ENCODE measurements at regions of chr2 and their contacts with region 1.

Region 1: GRCh38 chr2:20635675-20636584 is 15.0 kb downstream of the HS1BP3 start:
- DNase-seq: peak; percentile 78 to 87
- ATAC-seq: peak; percentile 90 to 98
- H3K4me3 ChIP-seq: no peak overlapping the region
- H3K27ac ChIP-seq: peak overlapping the region; percentile 50 to 75; a peak in 4 of 6 replicates
- H3K4me1 ChIP-seq: peaks cover 21% of the 10 kb centered on the region
- CTCF ChIP-seq: peak; percentile 97
- EP300 ChIP-seq: no peak
- POLR2A ChIP-seq: no peak
- RAD21 ChIP-seq: peak; percentile 100

Region 2: DNA sequence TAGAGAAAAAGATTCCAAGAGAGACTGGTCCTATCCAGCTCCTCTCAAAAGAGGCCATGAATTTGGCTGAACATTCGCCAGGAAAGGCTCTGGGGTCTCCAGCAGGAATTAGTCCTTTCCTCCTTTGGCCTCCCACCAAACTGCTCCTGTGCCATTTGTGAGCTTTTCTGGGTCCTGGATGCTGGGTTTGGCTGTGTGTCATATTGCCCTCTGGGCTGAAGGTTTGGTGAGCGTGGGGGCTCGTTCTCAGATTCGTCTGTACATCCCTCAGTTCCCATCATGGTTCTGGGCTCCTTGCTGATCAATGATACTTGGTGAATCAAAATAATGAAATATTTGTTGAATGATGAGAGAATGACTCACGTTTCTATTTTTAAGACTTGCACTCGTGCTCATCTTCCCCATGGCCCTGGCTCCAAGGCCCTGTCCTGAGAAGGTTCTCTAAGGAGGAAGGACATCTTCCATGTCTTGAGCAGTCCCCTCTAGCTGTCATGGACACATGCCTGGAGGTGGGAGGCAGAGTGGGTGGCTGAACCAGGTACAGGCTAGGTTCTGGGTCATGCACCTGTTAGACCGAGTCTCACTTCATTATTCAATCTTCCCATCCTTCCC is 236.9 kb before region 1 on chr2:
- CTCF ChIA-PET with region 1: interaction called, 355 read pairs
- POLR2A ChIA-PET with region 1: no interaction called
- DNase-seq: no peak
- ATAC-seq: no peak
- H3K4me3 ChIP-seq: no peak overlapping the region
- H3K27ac ChIP-seq: no peak overlapping the region
- H3K4me1 ChIP-seq: no peaks in the 10 kb centered on the region
- CTCF ChIP-seq: no peak
- EP300 ChIP-seq: no peak
- POLR2A ChIP-seq: no peak
- RAD21 ChIP-seq: no peak

Region 3: GRCh38 chr2:20438334-20439192 is 197.4 kb before region 1 on chr2:
- CTCF ChIA-PET with region 1: interaction called, 210 read pairs
- POLR2A ChIA-PET with region 1: interaction called, 6 read pairs
- DNase-seq: peak; percentile 78 to 91
- ATAC-seq: peak; percentile 80 to 86
- H3K4me3 ChIP-seq: peak overlapping the region; percentile 35
- H3K27ac ChIP-seq: peak overlapping the region; percentile 79 to 87
- H3K4me1 ChIP-seq: peaks cover 38% of the 10 kb centered on the region
- CTCF ChIP-seq: no peak
- EP300 ChIP-seq: peak; percentile 76 to 88; a peak in 2 of 5 replicates
- POLR2A ChIP-seq: no peak
- RAD21 ChIP-seq: no peak

Region 4: GRCh38 chr2:20516646-20517341 is 119.1 kb before region 1 on chr2:
- CTCF ChIA-PET with region 1: no interaction called
- POLR2A ChIA-PET with region 1: no interaction called
- DNase-seq: no peak
- ATAC-seq: no peak
- H3K4me3 ChIP-seq: no peak overlapping the region
- H3K27ac ChIP-seq: peak overlapping the region; percentile 35 to 42; a peak in 3 of 6 replicates
- H3K4me1 ChIP-seq: peaks cover 18% of the 10 kb centered on the region
- CTCF ChIP-seq: no peak
- EP300 ChIP-seq: no peak
- POLR2A ChIP-seq: no peak
- RAD21 ChIP-seq: no peak

Region 5: DNA sequence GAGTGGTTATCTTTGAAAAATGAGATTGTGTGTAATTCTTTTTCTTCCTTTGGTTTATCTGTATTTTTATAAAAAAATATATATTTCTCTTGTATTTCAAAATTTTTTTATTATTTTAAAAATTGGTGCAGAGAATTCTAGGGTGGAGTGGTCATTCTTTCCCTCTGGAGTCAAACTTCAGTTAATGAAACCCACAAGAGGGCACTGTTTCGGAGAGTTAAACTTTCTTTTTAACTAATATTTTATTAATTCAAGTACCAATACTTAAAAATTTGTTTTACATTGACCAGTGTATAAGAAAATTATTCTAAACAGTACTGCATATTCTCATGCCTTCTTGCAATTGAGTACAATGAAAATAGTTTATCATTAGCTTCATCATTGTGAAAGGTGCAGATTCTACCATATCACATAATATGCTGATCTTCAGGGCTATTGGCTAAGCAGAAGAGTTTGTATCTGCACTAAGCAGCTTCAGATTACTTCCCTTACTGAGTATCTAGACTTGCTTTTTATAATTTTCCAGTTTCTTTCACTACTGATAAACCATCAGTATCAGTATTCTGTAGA is 35.1 kb before region 1 on chr2:
- CTCF ChIA-PET with region 1: interaction called, 13 read pairs
- POLR2A ChIA-PET with region 1: interaction called, 3 read pairs
- DNase-seq: no peak
- ATAC-seq: no peak
- H3K4me3 ChIP-seq: no peak overlapping the region
- H3K27ac ChIP-seq: no peak overlapping the region; a peak in 1 of 6 replicates
- H3K4me1 ChIP-seq: peaks cover 22% of the 10 kb centered on the region
- CTCF ChIP-seq: peak; percentile 66
- EP300 ChIP-seq: no peak
- POLR2A ChIP-seq: no peak
- RAD21 ChIP-seq: peak; percentile 9 to 48; a peak in 2 of 5 replicates

Region 6: DNA sequence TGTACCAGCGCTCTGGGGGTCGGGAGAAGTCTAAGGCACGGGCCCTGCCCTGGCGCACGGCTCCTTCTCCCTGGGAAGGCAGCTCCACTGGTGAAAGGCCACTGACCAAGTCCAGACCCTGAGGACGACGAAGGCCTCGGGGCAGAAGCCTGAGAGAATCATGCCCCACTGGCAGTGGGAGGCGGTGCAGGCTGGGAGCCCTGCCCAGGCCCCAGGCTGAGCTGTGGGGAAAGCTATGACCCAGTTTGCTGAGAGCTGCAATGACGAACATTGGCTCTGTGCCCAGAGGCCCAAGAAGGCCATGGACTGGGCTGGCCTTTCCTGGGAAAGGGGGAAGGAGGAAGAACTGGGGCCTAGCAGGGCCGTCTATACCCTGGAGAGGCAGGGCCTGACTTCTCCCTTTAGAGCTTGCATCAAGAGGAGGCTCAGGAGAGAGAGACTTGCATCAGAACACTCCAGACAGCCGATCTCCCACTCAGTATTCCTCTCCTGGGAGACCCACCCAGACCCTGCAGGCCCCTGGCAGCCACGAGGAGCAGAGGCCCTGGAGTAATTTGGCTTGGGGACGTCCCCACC is 17.9 kb before region 1 on chr2:
- CTCF ChIA-PET with region 1: interaction called, 27 read pairs
- POLR2A ChIA-PET with region 1: no interaction called
- DNase-seq: peak; percentile 90 to 95
- ATAC-seq: peak; percentile 87 to 94
- H3K4me3 ChIP-seq: no peak overlapping the region
- H3K27ac ChIP-seq: peak overlapping the region; percentile 89 to 90
- H3K4me1 ChIP-seq: peaks cover 26% of the 10 kb centered on the region
- CTCF ChIP-seq: no peak
- EP300 ChIP-seq: no peak; a peak in 1 of 5 replicates
- POLR2A ChIP-seq: peak; percentile 24; the same call in 1 of the 2 replicates
- RAD21 ChIP-seq: peak; percentile 21 to 30; a peak in 3 of 5 replicates

Region 7: DNA sequence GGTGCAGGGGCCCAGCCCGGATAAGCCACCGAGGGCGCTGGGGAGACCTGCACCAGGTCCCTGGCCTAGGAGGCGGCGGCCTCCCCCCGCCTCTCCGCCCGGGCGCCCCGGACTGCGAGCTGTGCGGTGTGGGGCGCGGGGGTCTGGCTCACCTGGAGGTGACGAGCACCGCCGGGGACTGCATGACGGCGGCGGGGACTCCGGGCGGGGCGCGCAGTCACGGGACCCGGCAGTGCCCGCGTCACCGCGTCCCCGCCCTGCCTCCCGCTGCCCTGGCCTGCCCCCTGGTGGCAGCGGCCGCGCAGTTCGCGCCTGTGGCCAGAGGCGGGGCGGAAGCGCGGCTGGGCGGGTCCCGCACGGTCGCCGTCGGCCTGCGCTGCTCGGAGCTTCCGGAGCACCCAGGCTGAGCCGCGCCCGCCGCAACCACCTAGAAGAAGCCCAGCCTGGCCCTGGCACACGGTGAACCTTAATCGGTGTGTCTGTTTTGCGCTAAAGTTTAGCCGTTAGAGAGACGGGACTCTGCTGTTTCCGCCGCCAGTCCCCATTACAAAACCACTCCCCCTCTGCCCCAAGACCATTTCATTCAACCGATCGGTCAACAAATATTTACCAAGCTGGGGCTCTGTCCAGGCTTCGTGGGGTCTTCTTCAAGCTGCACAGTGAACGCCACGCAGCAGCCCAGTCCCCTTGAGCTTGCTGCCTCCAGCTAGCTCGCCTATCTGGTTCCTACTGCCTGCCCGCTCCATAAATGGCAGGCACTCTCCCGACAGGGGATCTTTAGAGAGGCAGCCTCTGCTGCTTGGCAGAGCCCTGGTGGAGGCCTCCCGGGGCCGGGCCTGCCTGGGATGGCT is 15.2 kb after region 1 on chr2 and contains the start of gene HS1BP3:
- CTCF ChIA-PET with region 1: interaction called, 195 read pairs
- POLR2A ChIA-PET with region 1: interaction called, 5 read pairs
- DNase-seq: peak; percentile 82 to 85
- ATAC-seq: peak; percentile 82 to 97
- H3K4me3 ChIP-seq: peak within 1 kb of the TSS; percentile 89
- H3K27ac ChIP-seq: peak within 1 kb of the TSS; percentile 94
- H3K4me1 ChIP-seq: peaks cover 12% of the 10 kb centered on the region; the same call in 2 of the 3 replicates
- CTCF ChIP-seq: peak; percentile 99
- EP300 ChIP-seq: no peak
- POLR2A ChIP-seq: peak; percentile 92
- RAD21 ChIP-seq: peak; percentile 53 to 84
- polyA plus RNA-seq, gene HS1BP3: 12.4 and 13.8 TPM in 2 replicates

Region 8: DNA sequence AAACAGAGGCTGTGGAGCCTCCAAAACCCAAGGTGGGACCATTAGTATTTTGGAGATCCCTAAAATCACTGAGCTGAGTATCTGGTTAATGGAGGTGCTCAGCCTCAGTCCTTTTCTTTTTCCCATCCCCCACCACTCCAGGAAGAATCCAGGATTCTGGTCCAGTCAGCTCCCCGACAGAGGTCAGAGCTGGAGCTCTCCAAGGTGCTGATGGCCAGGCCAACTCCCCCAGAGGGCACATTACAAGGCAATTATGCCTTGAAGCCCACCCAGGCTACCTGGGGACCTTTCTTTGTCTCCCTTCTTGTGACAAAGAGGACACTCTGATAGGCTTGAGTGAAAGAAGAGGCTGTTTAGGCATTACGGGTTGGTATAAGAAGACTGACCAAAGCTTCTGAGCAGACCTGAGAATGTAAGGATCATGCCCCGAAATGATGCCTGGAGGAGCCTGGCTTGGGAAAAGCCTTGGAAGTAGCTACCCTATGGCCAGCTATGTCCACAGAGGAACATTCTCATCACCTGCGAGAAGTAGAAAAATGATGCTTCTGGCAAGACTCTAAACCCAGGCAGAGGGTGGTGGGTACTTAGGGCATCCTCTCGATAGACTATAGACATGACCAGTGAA is 289.4 kb after region 1 on chr2:
- CTCF ChIA-PET with region 1: no interaction called
- POLR2A ChIA-PET with region 1: no interaction called
- DNase-seq: no peak
- ATAC-seq: no peak
- H3K4me3 ChIP-seq: no peak overlapping the region
- H3K27ac ChIP-seq: no peak overlapping the region
- H3K4me1 ChIP-seq: no peaks in the 10 kb centered on the region
- CTCF ChIP-seq: no peak
- EP300 ChIP-seq: no peak
- POLR2A ChIP-seq: no peak
- RAD21 ChIP-seq: no peak

Measured in A549 (cell line).